HepG2 (cell line): ENCODE measurements at regions of chr4 and their contacts with region 1.

Region 1: GRCh38 chr4:85747882-85748491 is 273.0 kb downstream of the ARHGAP24 start:
- DNase-seq: peak; percentile 53
- ATAC-seq: peak; percentile 83
- H3K4me3 ChIP-seq: no peak overlapping the region
- H3K27ac ChIP-seq: no peak overlapping the region
- H3K4me1 ChIP-seq: no peaks in the 10 kb centered on the region
- H3K27me3 ChIP-seq: no peaks in the 10 kb centered on the region
- CTCF ChIP-seq: peak; percentile 77
- EP300 ChIP-seq: no peak
- POLR2A ChIP-seq: no peak
- RAD21 ChIP-seq: 0 out of 2 replicates have a peak, but pooled peaks have one; percentile 25

Region 2: DNA sequence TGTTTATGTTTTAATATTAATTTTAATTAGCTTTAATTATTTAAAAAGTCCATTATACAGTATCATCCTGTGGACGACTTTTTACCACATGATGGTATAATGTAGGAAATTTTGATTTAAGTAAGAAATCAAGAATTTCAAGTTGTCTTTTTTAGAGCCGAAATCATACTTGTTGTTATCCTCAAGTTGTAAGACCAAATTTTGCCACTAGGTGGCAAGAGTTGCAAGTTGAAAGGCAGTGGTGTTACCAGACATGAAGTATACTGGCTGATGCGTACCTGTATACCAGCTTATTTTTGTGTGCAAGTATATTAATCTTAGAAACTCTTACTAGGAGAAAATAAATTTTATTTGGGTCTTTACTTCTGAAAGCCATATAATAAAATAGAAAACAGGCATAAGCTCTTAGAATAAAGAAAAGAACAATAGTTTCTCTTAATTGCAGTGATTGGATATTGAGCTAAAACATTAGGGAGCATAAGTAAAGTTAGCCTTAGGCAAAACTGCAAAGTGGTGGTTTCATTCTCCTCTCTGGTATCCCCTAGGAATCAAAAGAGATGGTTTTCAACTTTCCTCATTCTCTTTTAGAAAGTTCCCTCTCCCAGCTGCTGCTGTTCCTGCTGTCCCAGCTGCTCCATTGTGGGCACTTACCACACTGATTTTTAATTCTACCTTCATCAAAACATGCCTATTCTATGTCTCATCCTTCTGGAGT is 663.5 kb before region 1 on chr4:
- CTCF ChIA-PET with region 1: no interaction called
- POLR2A ChIA-PET with region 1: no interaction called
- in situ Hi-C with region 1: no loop called
- intact Hi-C with region 1: loop called (anchors 1 kb)
- DNase-seq: peak; percentile 60
- ATAC-seq: peak; percentile 80
- H3K4me3 ChIP-seq: no peak overlapping the region
- H3K27ac ChIP-seq: no peak overlapping the region
- H3K4me1 ChIP-seq: no peaks in the 10 kb centered on the region
- H3K27me3 ChIP-seq: no peaks in the 10 kb centered on the region
- CTCF ChIP-seq: peak; percentile 68
- EP300 ChIP-seq: no peak
- POLR2A ChIP-seq: no peak
- RAD21 ChIP-seq: no peak

Region 3: GRCh38 chr4:85147439-85148076 is 600.4 kb before region 1 on chr4:
- CTCF ChIA-PET with region 1: interaction called, 16 read pairs
- POLR2A ChIA-PET with region 1: no interaction called
- in situ Hi-C with region 1: loop called (anchors 25 kb)
- intact Hi-C with region 1: loop called (anchors 1 kb)
- DNase-seq: peak; percentile 50
- ATAC-seq: peak; percentile 79
- H3K4me3 ChIP-seq: no peak overlapping the region
- H3K27ac ChIP-seq: no peak overlapping the region
- H3K4me1 ChIP-seq: no peaks in the 10 kb centered on the region
- H3K27me3 ChIP-seq: no peaks in the 10 kb centered on the region
- CTCF ChIP-seq: peak; percentile 68
- EP300 ChIP-seq: no peak
- POLR2A ChIP-seq: no peak
- RAD21 ChIP-seq: 0 out of 2 replicates have a peak, but pooled peaks have one; percentile 30

Region 4: GRCh38 chr4:85423431-85423830 is 324.6 kb before region 1 on chr4:
- CTCF ChIA-PET with region 1: interaction called, 7 read pairs
- POLR2A ChIA-PET with region 1: no interaction called
- in situ Hi-C with region 1: no loop called
- intact Hi-C with region 1: loop called (anchors 1 kb)
- DNase-seq: no peak
- ATAC-seq: no peak
- H3K4me3 ChIP-seq: no peak overlapping the region
- H3K27ac ChIP-seq: no peak overlapping the region
- H3K4me1 ChIP-seq: no peaks in the 10 kb centered on the region
- H3K27me3 ChIP-seq: no peaks in the 10 kb centered on the region
- CTCF ChIP-seq: no peak
- EP300 ChIP-seq: no peak
- POLR2A ChIP-seq: no peak
- RAD21 ChIP-seq: no peak

Region 5: GRCh38 chr4:85543832-85544231 is 204.2 kb before region 1 on chr4:
- CTCF ChIA-PET with region 1: no interaction called
- POLR2A ChIA-PET with region 1: no interaction called
- in situ Hi-C with region 1: no loop called
- intact Hi-C with region 1: no loop called
- DNase-seq: no peak
- ATAC-seq: no peak
- H3K4me3 ChIP-seq: no peak overlapping the region
- H3K27ac ChIP-seq: no peak overlapping the region
- H3K4me1 ChIP-seq: no peaks in the 10 kb centered on the region
- H3K27me3 ChIP-seq: no peaks in the 10 kb centered on the region
- CTCF ChIP-seq: no peak
- EP300 ChIP-seq: no peak
- POLR2A ChIP-seq: no peak
- RAD21 ChIP-seq: no peak

Region 6: GRCh38 chr4:85734424-85734831 is 13.6 kb before region 1 on chr4:
- CTCF ChIA-PET with region 1: no interaction called
- POLR2A ChIA-PET with region 1: no interaction called
- in situ Hi-C with region 1: no loop called
- intact Hi-C with region 1: no loop called
- DNase-seq: no peak
- ATAC-seq: no peak
- H3K4me3 ChIP-seq: no peak overlapping the region
- H3K27ac ChIP-seq: no peak overlapping the region
- H3K4me1 ChIP-seq: no peaks in the 10 kb centered on the region
- H3K27me3 ChIP-seq: no peaks in the 10 kb centered on the region; a peak in 1 of 5 replicates
- CTCF ChIP-seq: no peak
- EP300 ChIP-seq: no peak
- POLR2A ChIP-seq: no peak
- RAD21 ChIP-seq: no peak